Gastrocnemius medialis (tissue), 4 donors: ENCODE measurements at regions of chr12 and their contacts with region 1.

Region 1: GRCh38 chr12:38316391-38317129 is at the start of gene ALG10B:
- DNase-seq: peak; percentile 87 to 90
- ATAC-seq: peak; percentile 100
- H3K4me3 ChIP-seq: peak within 1 kb of the TSS; percentile 73 to 84 (median 75)
- H3K27ac ChIP-seq: peak within 1 kb of the TSS; percentile 72 to 86 (median 84)
- H3K4me1 ChIP-seq: peaks cover 12% of the 10 kb centered on the region in 2 donors
- H3K27me3 ChIP-seq: no peaks in the 10 kb centered on the region
- CTCF ChIP-seq: peak; percentile 41 to 79 (median 59)
- POLR2A ChIP-seq: no peak
- total RNA-seq, gene ALG10B: 1.1 to 3.8 (median 3.2) TPM

Region 2: DNA sequence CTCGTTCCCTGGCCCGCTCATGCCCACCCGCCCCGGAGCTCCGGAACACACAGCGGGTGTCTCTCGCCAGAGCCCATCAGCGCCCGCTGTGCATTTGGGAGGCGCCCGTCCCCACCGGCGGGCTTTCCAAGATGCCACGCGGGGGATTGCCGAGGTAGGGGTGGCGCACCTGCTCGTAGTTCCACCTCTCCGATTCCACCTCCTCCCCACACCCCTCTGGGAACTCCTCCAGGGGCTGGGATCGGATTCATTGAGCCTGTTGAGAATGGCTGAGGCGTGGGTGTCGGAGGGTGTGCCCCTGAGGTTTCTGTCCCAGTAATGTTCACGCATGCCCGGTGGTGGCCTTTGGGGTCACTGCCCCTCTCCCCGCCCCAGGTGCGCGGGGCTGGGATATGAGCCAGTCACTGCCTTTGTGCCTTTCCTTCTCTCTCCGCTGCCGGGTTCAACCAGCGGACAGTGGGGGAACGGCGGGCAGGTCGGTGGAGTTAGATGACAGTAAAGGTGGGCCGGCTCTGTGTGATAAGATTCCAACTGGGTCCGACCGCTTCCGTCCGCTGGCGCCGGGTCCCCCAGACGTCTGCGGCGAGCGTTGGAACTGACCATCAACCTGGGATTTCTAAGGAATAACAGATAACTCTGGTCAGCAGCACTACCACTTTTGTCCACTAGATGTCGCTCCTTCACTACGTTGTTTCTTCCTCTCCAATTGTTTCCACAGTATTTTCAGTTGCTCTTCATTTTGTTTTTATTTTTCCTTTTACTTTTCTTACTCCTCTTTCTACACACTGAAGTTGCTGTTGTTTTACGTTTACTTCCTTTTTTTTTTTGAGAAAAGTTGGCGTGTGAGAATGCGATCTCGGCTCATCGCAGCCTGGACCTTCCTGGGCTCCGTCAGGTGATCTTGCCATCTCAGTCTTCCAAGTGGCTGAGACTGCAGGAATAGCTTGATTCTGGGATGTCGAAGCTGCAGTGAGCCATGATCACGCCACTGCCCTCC is 178.0 kb before region 1 on chr12:
- in situ Hi-C with region 1: loop called (anchors 5 kb)
- intact Hi-C with region 1: loop called (anchors 1 kb)
- DNase-seq: peak; percentile 20 to 39
- ATAC-seq: peak; percentile 80 to 87
- H3K4me3 ChIP-seq: peak overlapping the region; percentile 42 to 56 (median 46)
- H3K27ac ChIP-seq: no peak overlapping the region
- H3K4me1 ChIP-seq: peaks cover 0 to 7% of the 10 kb centered on the region in 2 donors
- H3K27me3 ChIP-seq: peaks cover 0 to 17% (median 7%) of the 10 kb centered on the region in 3 donors
- CTCF ChIP-seq: peak; percentile 85 to 97 (median 87)
- POLR2A ChIP-seq: no peak